ENCODE measurements at regions of chr2 and their contacts with region 1.

Region 1: DNA sequence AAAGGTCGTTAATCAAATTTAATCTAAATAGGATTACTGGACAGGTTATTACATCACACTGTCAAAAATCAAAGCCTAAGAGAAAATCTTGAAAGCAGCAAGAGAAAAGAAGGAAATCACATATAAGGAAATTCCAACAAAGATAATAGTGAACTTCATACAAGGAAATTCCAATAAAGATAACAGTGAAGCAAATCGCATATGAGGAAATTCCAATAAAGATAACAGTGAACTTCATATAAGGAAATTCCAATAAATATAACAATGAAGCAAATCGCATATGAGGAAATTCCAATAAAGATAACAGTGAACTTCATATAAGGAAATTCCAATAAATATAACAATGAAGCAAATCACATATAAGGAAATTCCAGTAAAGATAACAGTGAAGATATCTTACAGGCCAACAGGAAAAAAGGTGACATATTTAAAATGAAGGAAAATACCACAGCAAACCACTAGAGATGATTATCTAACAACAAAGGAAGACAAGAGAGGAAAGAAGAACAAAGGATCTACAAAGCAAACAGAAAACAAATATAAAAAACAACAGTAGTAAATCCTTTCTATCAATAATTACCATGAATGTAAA is 787.7 kb downstream of the CCDC85A start:
- DNase-seq: no peak
- H3K4me3 Mint-ChIP-seq: no peak overlapping the region
- H3K27ac Mint-ChIP-seq: peak overlapping the region; percentile 27
- H3K4me1 Mint-ChIP-seq: peaks cover 21% of the 10 kb centered on the region
- H3K27me3 Mint-ChIP-seq: no peaks in the 10 kb centered on the region
- CTCF ChIP-seq: no peak

Region 2: GRCh38 chr2:56871644-56872043 is 99.8 kb before region 1 on chr2:
- CTCF ChIA-PET with region 1: no interaction called
- intact Hi-C with region 1: no loop called
- DNase-seq: no peak
- H3K4me3 Mint-ChIP-seq: no peak overlapping the region
- H3K27ac Mint-ChIP-seq: no peak overlapping the region
- H3K4me1 Mint-ChIP-seq: no peaks in the 10 kb centered on the region
- H3K27me3 Mint-ChIP-seq: no peaks in the 10 kb centered on the region
- CTCF ChIP-seq: no peak

Region 3: GRCh38 chr2:57075226-57075625 is 103.7 kb after region 1 on chr2:
- CTCF ChIA-PET with region 1: no interaction called
- intact Hi-C with region 1: no loop called
- DNase-seq: no peak
- H3K4me3 Mint-ChIP-seq: no peak overlapping the region
- H3K27ac Mint-ChIP-seq: peak overlapping the region; percentile 46
- H3K4me1 Mint-ChIP-seq: peaks cover 41% of the 10 kb centered on the region
- H3K27me3 Mint-ChIP-seq: no peaks in the 10 kb centered on the region
- CTCF ChIP-seq: no peak

Region 4: DNA sequence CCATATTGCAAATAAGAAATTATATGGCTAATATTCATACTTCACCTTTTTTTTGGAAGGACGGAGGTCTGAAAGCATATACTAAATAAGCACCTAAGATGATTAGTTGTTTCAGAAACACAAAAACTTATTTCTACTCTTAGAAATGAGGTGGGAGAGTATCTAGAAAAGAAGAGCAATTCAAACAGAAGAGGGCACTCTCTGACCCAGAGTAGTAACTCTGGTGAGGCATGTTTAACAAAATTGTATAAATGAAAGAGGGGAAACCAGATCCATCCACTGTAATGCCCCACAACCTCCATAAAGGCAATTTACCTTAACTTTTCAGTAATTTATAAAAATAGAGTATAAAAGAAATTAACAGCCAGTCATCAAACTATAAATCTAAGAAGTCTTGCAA is 405.5 kb after region 1 on chr2:
- CTCF ChIA-PET with region 1: no interaction called
- intact Hi-C with region 1: loop called (anchors 10 kb)
- DNase-seq: no peak
- H3K4me3 Mint-ChIP-seq: no peak overlapping the region
- H3K27ac Mint-ChIP-seq: no peak overlapping the region
- H3K4me1 Mint-ChIP-seq: peaks cover 28% of the 10 kb centered on the region
- H3K27me3 Mint-ChIP-seq: no peaks in the 10 kb centered on the region
- CTCF ChIP-seq: no peak

Measured in Calu3 (cell line).